Mammary epithelial cell (primary cell): ENCODE measurements at regions of chr1 and their contacts with region 1.

Region 1: DNA sequence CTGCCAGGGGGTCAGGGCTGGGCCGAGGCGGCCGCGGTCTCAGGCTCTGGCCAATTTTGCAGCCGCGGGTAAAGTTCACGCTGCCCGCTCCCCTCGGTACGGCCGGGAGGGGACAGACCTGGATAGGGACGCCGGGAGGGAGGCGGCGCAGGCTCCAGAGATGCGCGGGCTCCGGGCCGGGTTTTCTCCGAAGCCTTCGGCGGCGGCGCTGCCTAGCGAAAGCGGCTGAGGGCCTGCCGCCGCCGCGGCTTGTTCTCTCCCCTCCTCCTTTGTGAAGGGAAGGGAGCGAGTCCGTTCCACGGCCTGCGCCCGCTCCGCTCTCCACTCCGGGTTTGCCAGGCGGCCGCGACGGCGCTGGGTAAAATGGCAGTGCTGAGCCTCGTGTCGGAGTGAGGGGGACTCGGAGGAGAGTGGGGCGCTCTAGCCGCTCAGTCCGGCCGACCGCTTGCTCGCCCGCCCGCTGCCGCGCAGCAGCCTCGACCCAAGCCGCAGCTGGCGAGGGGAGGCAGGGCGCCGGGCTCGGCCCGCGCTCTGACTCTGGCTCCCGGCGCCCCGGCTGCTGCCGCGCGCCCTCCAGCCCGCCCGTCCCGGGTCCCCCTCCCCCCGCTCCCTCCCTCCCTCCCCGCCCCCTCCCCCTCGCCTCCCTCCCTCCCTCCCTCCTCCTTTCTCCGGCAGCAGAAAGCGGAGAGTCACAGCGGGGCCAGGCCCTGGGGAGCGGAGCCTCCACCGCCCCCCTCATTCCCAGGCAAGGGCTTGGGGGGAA is at the start of gene ARID1A:
- DNase-seq: peak; percentile 98
- H3K4me3 ChIP-seq: peak within 1 kb of the TSS; percentile 65 to 74 (median 69)
- H3K27ac ChIP-seq: peak within 1 kb of the TSS; percentile 68
- H3K4me1 ChIP-seq: peaks cover 48% of the 10 kb centered on the region
- H3K27me3 ChIP-seq: no peaks in the 10 kb centered on the region
- CTCF ChIP-seq: peak in 1 of 2 donors; percentile 4
- total RNA-seq, gene ARID1A: 29.7 to 50.4 TPM

Region 2: DNA sequence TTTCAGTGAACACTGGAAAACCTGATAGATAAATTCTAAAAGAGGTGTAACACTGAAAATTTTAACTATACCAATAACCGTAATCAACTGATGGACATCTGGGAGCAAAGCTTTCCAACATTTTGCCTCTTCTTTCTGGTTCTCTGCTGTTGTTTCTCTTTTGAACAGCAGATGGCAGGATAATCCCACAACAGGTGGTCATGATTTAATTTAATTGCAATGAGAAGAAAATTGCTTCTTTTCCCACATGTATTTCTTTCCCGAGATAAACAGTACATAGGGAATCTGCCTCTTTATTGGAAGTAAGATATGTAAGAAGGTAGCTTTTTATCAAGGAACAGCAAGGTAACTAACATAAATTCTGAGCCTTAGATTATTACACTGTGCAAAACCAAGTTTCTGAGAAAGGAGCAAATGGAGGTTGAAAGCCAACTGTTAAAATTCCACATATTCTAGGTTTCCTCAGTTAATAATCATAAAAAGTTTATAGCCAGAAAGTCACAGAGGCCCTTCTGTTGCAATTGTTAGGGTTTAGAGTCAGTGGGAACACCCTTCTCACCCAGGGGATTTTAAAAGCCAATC is 93.1 kb before region 1 on chr1:
- CTCF ChIA-PET with region 1: interaction called, 5 read pairs
- dilution Hi-C with region 1: no loop called
- in situ Hi-C with region 1: no loop called
- intact Hi-C with region 1: loop called (anchors 1 kb)
- DNase-seq: peak; percentile 48
- H3K4me3 ChIP-seq: no peak overlapping the region
- H3K27ac ChIP-seq: no peak overlapping the region
- H3K4me1 ChIP-seq: no peaks in the 10 kb centered on the region
- H3K27me3 ChIP-seq: no peaks in the 10 kb centered on the region
- CTCF ChIP-seq: peak; percentile 81 to 82

Region 3: GRCh38 chr1:26677306-26678115 is 18.0 kb before region 1 on chr1:
- CTCF ChIA-PET with region 1: interaction called, 11 read pairs
- dilution Hi-C with region 1: no loop called
- in situ Hi-C with region 1: no loop called
- intact Hi-C with region 1: loop called (anchors 1 kb)
- DNase-seq: peak; percentile 91
- H3K4me3 ChIP-seq: no peak overlapping the region
- H3K27ac ChIP-seq: no peak overlapping the region
- H3K4me1 ChIP-seq: peaks cover 4% of the 10 kb centered on the region
- H3K27me3 ChIP-seq: no peaks in the 10 kb centered on the region
- CTCF ChIP-seq: peak; percentile 77 to 90

Region 4: GRCh38 chr1:26717017-26717491 is 21.5 kb after region 1 on chr1:
- CTCF ChIA-PET with region 1: no interaction called
- dilution Hi-C with region 1: no loop called
- in situ Hi-C with region 1: no loop called
- intact Hi-C with region 1: loop called (anchors 2 kb)
- DNase-seq: no peak
- H3K4me3 ChIP-seq: no peak overlapping the region
- H3K27ac ChIP-seq: no peak overlapping the region
- H3K4me1 ChIP-seq: peaks cover 9% of the 10 kb centered on the region
- H3K27me3 ChIP-seq: no peaks in the 10 kb centered on the region
- CTCF ChIP-seq: no peak

Region 5: GRCh38 chr1:26733982-26734381 is 38.4 kb after region 1 on chr1:
- CTCF ChIA-PET with region 1: no interaction called
- dilution Hi-C with region 1: no loop called
- in situ Hi-C with region 1: no loop called
- intact Hi-C with region 1: loop called (anchors 2 kb)
- DNase-seq: peak; percentile 90
- H3K4me3 ChIP-seq: no peak overlapping the region
- H3K27ac ChIP-seq: peak overlapping the region; percentile 73
- H3K4me1 ChIP-seq: peaks cover 27% of the 10 kb centered on the region
- H3K27me3 ChIP-seq: no peaks in the 10 kb centered on the region
- CTCF ChIP-seq: no peak

Region 6: DNA sequence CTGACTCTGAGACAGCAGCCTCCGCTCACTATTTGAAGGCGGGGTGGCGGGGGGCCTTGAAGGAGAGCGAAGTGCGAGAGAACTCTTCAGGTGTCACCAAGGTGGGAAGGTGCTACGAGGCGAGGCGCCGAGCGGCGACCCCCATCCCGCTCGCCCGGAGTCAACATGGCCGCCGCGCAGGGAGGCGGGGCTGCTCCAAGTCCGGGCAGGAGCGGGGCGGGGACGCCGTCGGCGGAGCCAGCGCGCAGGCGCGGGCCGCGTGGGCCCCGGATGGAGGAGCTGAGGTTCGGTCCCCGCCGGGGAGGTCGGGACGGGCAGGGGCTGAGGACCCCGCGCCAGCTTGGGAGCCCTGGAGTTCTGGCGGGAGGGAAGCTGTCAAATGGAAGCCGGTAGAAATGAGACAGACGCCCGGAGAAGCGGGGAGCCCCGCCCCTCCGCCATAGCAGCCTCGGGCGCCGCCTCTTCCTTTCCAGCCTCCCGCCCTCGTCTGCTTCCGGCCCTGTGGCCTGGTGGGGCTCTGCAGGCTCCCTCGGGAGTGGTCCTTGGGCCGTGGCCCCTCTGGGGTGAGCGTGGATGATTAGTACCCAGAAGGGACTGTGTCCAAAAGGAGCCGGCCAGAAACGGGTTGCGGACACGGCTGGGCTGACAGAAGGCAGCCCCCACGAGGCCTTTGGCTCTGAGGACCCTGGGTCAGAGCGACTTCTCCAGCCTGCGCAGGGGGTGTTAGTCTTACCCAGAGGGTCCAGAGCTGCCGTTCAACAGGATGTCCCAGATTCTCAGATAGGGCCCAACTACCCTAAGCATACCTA is 92.4 kb after region 1 on chr1 and contains the start of gene PIGV:
- CTCF ChIA-PET with region 1: interaction called, 5 read pairs
- dilution Hi-C with region 1: no loop called
- in situ Hi-C with region 1: no loop called
- intact Hi-C with region 1: loop called (anchors 1 kb)
- DNase-seq: peak; percentile 78
- H3K4me3 ChIP-seq: peak within 1 kb of the TSS; percentile 61 to 80 (median 74)
- H3K27ac ChIP-seq: peak within 1 kb of the TSS; percentile 93
- H3K4me1 ChIP-seq: peaks cover 26% of the 10 kb centered on the region
- H3K27me3 ChIP-seq: no peaks in the 10 kb centered on the region
- CTCF ChIP-seq: peak in 1 of 2 donors; percentile 12
- total RNA-seq, gene PIGV: 18.0 to 19.2 TPM

Region 7: DNA sequence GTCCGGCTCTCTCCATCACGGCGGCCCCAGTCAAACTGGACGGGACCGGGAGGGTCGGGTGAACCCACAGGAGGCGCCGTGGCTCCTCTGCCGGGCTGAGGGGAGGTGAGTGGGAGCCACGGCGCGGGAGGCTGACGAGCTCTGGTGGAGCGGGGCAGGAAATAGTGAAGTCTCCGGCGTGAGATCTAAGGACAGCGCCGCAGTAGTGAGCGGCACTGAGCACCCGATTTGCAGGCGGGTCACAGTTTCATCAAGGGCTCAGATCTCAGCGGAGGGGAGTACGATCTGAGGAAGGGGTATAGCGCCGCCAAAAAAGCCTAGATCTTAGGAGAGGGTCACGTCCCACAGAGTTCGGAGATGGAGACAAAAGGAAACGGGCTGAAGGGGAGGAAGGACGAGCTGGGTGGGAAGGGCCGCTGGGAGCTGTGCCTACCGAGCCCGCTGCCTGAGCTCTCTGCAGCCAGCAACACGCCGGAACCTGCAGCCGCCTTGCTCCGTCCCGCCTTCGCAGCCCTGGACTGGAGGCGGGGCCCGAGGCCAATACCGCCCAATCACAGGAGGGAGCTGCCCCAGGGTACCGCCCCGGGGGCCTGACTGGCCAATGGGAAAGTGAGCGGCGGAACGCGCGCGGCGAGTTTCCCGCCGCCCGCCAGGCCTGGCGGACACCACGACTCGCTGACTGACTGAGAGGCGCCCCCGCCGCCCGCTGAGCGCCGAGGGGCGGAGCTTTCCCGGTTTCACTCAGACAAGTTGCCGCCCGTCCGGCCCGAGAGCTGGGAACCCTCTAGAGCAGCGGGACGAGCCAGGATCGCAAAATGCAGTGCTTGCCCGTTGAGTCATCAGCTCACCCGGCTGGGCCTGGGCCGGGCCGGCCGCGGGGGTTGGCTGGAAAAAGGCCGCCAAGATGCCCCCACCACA is 169.3 kb after region 1 on chr1:
- CTCF ChIA-PET with region 1: no interaction called
- dilution Hi-C with region 1: no loop called
- in situ Hi-C with region 1: no loop called
- intact Hi-C with region 1: loop called (anchors 5 kb)
- DNase-seq: peak; percentile 98
- H3K4me3 ChIP-seq: peak overlapping the region; percentile 53 to 99 (median 82)
- H3K27ac ChIP-seq: peak overlapping the region; percentile 98
- H3K4me1 ChIP-seq: peaks cover 36% of the 10 kb centered on the region
- H3K27me3 ChIP-seq: no peaks in the 10 kb centered on the region
- CTCF ChIP-seq: peak in 1 of 2 donors; percentile 1